CD4-positive, alpha-beta T cell (primary cell): ENCODE measurements at regions of chr9 and their contacts with region 1.

Region 1: DNA sequence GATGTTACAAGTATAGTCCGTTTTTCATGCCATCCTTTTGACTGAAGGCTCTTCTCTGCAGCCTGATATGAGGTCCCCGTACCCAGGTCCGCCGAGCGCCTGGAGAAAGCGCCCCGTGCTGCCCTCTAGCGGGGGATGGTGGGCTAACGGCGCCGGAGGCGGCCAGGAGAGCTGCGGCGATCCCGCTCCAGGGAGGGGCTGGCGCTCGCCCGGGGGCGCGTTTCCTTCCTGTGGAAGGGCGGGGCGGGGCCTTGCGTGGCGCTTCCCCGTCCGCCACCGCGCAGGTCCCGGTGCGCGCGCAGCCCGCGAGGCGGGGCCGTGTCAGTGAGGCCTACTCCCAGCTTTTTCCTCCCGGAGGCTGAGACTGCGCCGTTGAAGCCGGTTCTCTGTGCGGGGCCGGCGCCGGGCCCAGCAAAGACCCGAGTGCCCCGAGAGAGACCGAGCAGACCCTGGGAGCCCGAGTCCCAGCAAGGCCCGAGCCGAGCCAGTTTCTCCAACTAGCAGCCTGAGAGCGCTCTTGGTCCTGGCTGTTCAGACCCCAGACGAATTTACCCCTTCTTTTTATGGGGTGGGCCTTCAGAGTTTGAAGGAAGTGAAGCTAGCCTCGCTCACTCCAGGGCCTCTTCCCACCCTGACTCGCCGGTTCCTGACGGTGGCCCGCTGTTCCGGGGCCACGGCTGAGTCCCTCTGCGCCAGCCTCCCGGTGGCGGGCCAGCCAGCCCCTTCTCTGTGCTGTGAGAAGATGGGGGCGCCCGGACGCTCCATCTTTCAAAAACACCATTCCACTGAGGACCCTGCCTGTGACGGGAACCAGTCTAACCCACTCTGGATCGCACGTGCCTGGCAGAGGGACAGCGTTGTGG is 9.7 kb upstream of the PHF2 start:
- DNase-seq: peak; percentile 95 to 99 (median 99)
- ATAC-seq: peak; percentile 97
- H3K4me3 ChIP-seq: peak overlapping the region; percentile 70
- H3K4me3 Mint-ChIP-seq: peak overlapping the region; percentile 88
- H3K27ac ChIP-seq: peak overlapping the region; percentile 89 to 92
- H3K27ac Mint-ChIP-seq: peak overlapping the region; percentile 90
- H3K4me1 ChIP-seq: peaks cover 19% of the 10 kb centered on the region
- H3K4me1 Mint-ChIP-seq: peaks cover 10% of the 10 kb centered on the region
- H3K27me3 ChIP-seq: no peaks in the 10 kb centered on the region
- H3K27me3 Mint-ChIP-seq: no peaks in the 10 kb centered on the region
- CTCF ChIP-seq: peak; percentile 91

Region 2: DNA sequence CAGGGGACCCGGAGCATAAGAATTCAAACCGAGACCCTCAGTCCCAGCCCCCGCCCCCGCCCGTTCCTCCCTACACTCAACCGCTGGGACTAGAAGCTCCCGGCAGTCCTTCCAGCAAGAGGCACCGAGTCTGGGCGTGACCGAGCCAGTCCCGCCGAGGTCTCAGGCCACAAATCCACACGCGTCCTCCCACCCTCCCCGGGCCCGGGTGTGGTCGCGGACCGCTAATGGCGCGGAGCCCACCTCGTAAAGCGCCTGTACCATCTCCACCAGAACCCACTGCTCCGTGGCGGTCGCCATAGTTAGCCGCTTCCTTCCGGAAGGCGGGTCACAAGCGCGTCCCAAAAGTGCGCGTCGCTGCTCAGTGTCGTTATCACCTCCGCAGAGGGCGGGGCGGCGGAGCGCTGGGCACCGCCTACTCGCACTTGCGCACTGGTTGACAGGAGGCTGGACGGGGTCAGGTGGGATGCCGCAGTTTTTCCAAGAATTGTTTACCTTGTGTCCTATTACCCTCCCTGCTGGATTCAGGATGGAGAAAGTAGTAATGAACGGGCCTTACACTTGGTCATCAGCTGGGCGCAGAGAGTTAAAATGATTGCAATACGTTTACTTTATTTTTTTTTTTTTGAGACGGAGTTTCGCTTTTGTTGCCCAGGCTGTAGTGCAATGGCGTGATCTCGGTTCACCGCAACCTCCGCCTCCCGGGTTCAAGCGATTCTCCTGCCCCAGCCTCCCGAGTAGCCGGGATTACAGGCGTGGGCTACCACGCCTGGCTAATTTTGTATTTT is 1451.4 kb before region 1 on chr9 and contains the start of gene SPTLC1:
- CTCF ChIA-PET with region 1: no interaction called
- POLR2A ChIA-PET with region 1: no interaction called
- intact Hi-C with region 1: loop called in 1 of 2 experiments (anchors 5 kb)
- DNase-seq: peak; percentile 90 to 98 (median 92)
- ATAC-seq: peak; percentile 94
- H3K4me3 ChIP-seq: peak within 1 kb of the TSS; percentile 71
- H3K4me3 Mint-ChIP-seq: peak within 1 kb of the TSS; percentile 94
- H3K27ac ChIP-seq: peak within 1 kb of the TSS; percentile 84 to 89
- H3K27ac Mint-ChIP-seq: peak within 1 kb of the TSS; percentile 97
- H3K4me1 ChIP-seq: peaks cover 9% of the 10 kb centered on the region
- H3K4me1 Mint-ChIP-seq: peaks cover 47% of the 10 kb centered on the region
- H3K27me3 ChIP-seq: no peaks in the 10 kb centered on the region
- H3K27me3 Mint-ChIP-seq: no peaks in the 10 kb centered on the region
- CTCF ChIP-seq: no peak
- total RNA-seq, gene SPTLC1: 40.9 to 43.0 TPM

Region 3: GRCh38 chr9:92325269-92325990 is 1241.2 kb before region 1 on chr9 and contains the starts of genes CENPP and NOL8:
- CTCF ChIA-PET with region 1: no interaction called
- POLR2A ChIA-PET with region 1: no interaction called
- intact Hi-C with region 1: loop called (anchors 10 kb)
- DNase-seq: peak; percentile 68 to 93 (median 76)
- ATAC-seq: peak; percentile 94
- H3K4me3 ChIP-seq: peak within 1 kb of the TSS; percentile 69
- H3K4me3 Mint-ChIP-seq: peak within 1 kb of the TSS; percentile 96
- H3K27ac ChIP-seq: peak within 1 kb of the TSS; percentile 94 to 97
- H3K27ac Mint-ChIP-seq: peak within 1 kb of the TSS; percentile 94
- H3K4me1 ChIP-seq: peaks cover 13% of the 10 kb centered on the region
- H3K4me1 Mint-ChIP-seq: peaks cover 40% of the 10 kb centered on the region
- H3K27me3 ChIP-seq: no peaks in the 10 kb centered on the region
- H3K27me3 Mint-ChIP-seq: no peaks in the 10 kb centered on the region
- CTCF ChIP-seq: no peak
- total RNA-seq, gene CENPP: 4.8 TPM
- total RNA-seq, gene NOL8: 55.9 to 65.7 TPM

Region 4: DNA sequence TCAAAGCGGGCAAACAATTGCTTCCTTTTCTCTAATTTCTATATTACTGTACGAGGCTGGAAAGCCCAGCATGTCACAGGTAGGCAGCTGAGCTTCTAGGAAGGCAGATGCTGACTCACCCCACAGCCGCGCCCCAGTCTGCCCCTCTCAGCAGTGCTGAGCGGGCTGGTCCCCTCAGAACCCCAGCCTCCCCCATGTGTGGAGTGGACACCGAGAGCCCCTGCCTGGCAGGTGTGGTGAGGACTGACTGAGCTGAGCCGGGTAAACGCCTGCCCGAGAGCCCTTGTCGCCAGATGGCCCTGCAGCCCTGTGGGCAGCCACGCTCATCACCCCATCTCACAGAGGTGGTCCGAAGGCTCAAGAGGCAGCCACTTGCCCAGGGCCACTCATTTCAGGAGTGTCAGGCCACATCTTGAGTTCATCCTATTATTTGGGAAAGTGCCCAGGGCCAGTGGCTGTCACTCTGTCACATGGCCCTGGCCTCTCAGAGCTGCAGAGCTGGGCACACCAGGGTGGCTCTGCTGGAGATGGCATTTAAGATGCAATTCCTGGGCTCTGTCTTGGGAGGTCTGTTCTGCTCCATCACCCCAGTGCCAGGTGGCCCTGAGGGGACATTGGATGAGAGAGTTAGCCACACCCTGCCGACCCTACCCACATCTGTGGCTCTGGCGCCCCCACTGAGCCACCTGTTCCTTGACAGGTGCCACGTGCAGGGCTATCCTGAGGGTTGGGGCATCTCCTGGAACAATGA is 458.2 kb before region 1 on chr9:
- CTCF ChIA-PET with region 1: no interaction called
- POLR2A ChIA-PET with region 1: interaction called, 5 read pairs
- intact Hi-C with region 1: loop called in 1 of 2 experiments (anchors 2 kb)
- DNase-seq: peak in 2 of 14 experiments; percentile 39 to 48
- ATAC-seq: no peak
- H3K4me3 ChIP-seq: no peak overlapping the region
- H3K4me3 Mint-ChIP-seq: no peak overlapping the region
- H3K27ac ChIP-seq: no peak overlapping the region
- H3K27ac Mint-ChIP-seq: peak overlapping the region; percentile 52
- H3K4me1 ChIP-seq: peaks cover 65% of the 10 kb centered on the region
- H3K4me1 Mint-ChIP-seq: peaks cover 58% of the 10 kb centered on the region
- H3K27me3 ChIP-seq: no peaks in the 10 kb centered on the region
- H3K27me3 Mint-ChIP-seq: no peaks in the 10 kb centered on the region
- CTCF ChIP-seq: no peak

Region 5: DNA sequence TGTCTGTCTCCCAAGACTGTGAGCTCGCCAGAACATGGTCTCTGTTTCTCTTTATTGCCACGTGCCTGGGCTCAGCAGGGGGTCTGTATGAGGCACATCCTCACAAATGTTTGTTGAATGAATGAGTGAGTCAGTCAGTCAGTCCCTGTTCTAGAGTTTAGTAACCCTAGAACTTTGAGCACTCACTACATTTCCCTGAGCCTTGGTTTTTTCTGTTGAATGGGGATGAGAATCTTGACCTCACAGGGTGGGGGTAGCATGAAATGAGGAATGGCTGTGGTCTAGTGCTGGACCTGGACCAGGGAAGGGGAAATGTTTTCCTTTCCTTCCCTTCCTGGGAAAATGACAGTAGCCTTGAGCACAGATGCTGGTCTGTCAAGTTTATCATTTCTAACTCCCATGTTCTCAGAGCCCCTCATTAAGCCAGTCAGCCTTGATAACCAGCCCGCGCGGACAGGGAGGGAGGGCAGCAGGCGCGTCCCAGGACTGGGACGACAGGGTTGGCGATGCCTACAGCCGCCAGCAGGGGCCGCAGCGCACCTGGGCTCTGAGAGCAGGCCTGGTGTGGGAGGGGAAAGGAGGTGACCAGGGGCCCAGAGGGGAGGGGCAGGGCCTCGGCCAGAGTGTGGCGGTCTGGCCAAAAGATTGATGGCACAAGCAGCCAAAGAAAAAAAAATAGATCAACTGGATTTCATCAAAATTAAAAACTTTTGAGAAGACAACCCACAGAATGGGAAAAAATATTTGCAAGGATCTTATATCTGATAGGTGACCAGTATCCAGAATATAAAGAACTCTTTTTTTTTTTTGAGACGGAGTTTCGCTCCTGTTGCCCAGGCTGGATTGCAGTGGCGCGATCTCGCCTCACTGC is 406.8 kb before region 1 on chr9:
- CTCF ChIA-PET with region 1: no interaction called
- POLR2A ChIA-PET with region 1: no interaction called
- intact Hi-C with region 1: loop called (anchors 5 to 10 kb)
- DNase-seq: peak; percentile 41 to 81 (median 63)
- ATAC-seq: peak; percentile 89
- H3K4me3 ChIP-seq: no peak overlapping the region
- H3K4me3 Mint-ChIP-seq: no peak overlapping the region
- H3K27ac ChIP-seq: no peak overlapping the region
- H3K27ac Mint-ChIP-seq: no peak overlapping the region
- H3K4me1 ChIP-seq: peaks cover 15% of the 10 kb centered on the region
- H3K4me1 Mint-ChIP-seq: peaks cover 14% of the 10 kb centered on the region
- H3K27me3 ChIP-seq: no peaks in the 10 kb centered on the region
- H3K27me3 Mint-ChIP-seq: no peaks in the 10 kb centered on the region
- CTCF ChIP-seq: peak; percentile 96

Region 6: GRCh38 chr9:94681508-94681907 is 1114.9 kb after region 1 on chr9:
- CTCF ChIA-PET with region 1: no interaction called
- POLR2A ChIA-PET with region 1: no interaction called
- intact Hi-C with region 1: no loop called
- DNase-seq: peak; percentile 28 to 79 (median 46)
- ATAC-seq: peak; percentile 87
- H3K4me3 ChIP-seq: no peak overlapping the region
- H3K4me3 Mint-ChIP-seq: no peak overlapping the region
- H3K27ac ChIP-seq: no peak overlapping the region
- H3K27ac Mint-ChIP-seq: no peak overlapping the region
- H3K4me1 ChIP-seq: peaks cover 3% of the 10 kb centered on the region
- H3K4me1 Mint-ChIP-seq: no peaks in the 10 kb centered on the region
- H3K27me3 ChIP-seq: no peaks in the 10 kb centered on the region
- H3K27me3 Mint-ChIP-seq: peaks cover 24% of the 10 kb centered on the region
- CTCF ChIP-seq: peak; percentile 80